ENCODE measurements at regions of chr13 and their contacts with region 1.

Region 1: GRCh38 chr13:51070005-51070649 is 40.9 kb downstream of the C13orf42 start:
- DNase-seq: peak; percentile 79 to 86
- ATAC-seq: peak; percentile 72 to 88 (median 82)
- H3K4me3 ChIP-seq: no peak overlapping the region
- H3K27ac ChIP-seq: no peak overlapping the region
- H3K4me1 ChIP-seq: no peaks in the 10 kb centered on the region
- H3K27me3 ChIP-seq: no peaks in the 10 kb centered on the region
- CTCF ChIP-seq: peak; percentile 92

Region 2: DNA sequence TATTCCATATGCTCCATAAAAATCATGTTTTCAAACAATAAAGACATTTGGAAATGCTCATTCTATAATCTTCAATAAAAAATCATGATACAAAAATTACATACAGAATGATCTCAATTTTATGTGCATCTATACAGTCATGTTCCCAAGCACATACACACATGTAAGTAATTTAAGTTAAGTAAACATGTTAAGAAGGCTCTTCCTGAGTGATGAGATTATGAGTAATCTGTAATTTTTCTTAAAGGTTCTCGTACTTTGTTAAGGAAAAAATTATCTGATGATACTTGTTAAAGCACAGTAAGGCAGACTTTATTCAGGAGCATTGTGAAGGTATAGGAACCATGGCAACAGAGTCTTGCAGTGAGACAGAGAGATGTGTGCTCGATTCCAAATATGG is 196.7 kb before region 1 on chr13:
- intact Hi-C with region 1: no loop called
- DNase-seq: no peak
- ATAC-seq: no peak
- H3K4me3 ChIP-seq: no peak overlapping the region
- H3K27ac ChIP-seq: no peak overlapping the region
- H3K4me1 ChIP-seq: no peaks in the 10 kb centered on the region
- H3K27me3 ChIP-seq: no peaks in the 10 kb centered on the region
- CTCF ChIP-seq: no peak

Region 3: GRCh38 chr13:50898338-50898737 is 171.8 kb before region 1 on chr13:
- intact Hi-C with region 1: no loop called
- DNase-seq: no peak
- ATAC-seq: no peak
- H3K4me3 ChIP-seq: no peak overlapping the region
- H3K27ac ChIP-seq: no peak overlapping the region
- H3K4me1 ChIP-seq: no peaks in the 10 kb centered on the region
- H3K27me3 ChIP-seq: no peaks in the 10 kb centered on the region
- CTCF ChIP-seq: no peak

Region 4: GRCh38 chr13:50969691-50970090 is 100.4 kb before region 1 on chr13:
- intact Hi-C with region 1: loop called in 1 of 2 experiments (anchors 5 kb)
- DNase-seq: no peak
- ATAC-seq: no peak
- H3K4me3 ChIP-seq: no peak overlapping the region
- H3K27ac ChIP-seq: no peak overlapping the region
- H3K4me1 ChIP-seq: no peaks in the 10 kb centered on the region
- H3K27me3 ChIP-seq: no peaks in the 10 kb centered on the region
- CTCF ChIP-seq: no peak

Measured in psoas muscle (tissue), 8 donors.